ENCODE measurements at regions of chr11 and their contacts with region 1.

Region 1: DNA sequence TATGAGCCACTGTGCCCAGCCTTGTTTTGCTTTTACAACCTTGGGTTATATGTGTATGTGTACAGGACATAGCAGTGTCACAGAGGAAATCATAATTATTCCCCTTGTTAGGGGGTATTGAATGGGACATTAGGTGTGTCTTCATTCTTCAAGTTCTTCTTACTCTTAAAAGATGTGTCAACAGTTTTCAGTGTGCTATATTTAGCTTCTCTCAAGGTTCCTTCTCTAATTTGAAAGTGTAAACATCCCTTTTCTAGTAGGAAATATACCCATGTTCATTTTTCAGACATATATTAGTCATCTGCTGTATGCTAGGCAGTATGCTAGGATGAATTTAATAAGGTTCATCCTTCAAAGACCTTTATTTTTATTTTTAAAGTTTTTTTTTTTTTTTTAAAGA is 17.1 kb downstream of the PCF11 start:
- DNase-seq: no peak
- H3K4me3 Mint-ChIP-seq: no peak overlapping the region
- H3K27ac Mint-ChIP-seq: peak overlapping the region; percentile 73
- H3K4me1 Mint-ChIP-seq: peaks cover 69% of the 10 kb centered on the region
- H3K27me3 Mint-ChIP-seq: no peaks in the 10 kb centered on the region

Region 2: GRCh38 chr11:83162377-83162776 is 11.6 kb before region 1 on chr11:
- CTCF ChIA-PET with region 1: interaction called, 3 read pairs
- POLR2A ChIA-PET with region 1: interaction called, 6 read pairs
- intact Hi-C with region 1: loop called (anchors 1 kb)
- DNase-seq: no peak
- H3K4me3 Mint-ChIP-seq: peak overlapping the region; percentile 42
- H3K27ac Mint-ChIP-seq: no peak overlapping the region
- H3K4me1 Mint-ChIP-seq: peaks cover 54% of the 10 kb centered on the region
- H3K27me3 Mint-ChIP-seq: no peaks in the 10 kb centered on the region

Region 3: GRCh38 chr11:83193315-83194280 is 19.6 kb after region 1 on chr11 and contains the start of gene ANKRD42:
- CTCF ChIA-PET with region 1: no interaction called
- POLR2A ChIA-PET with region 1: no interaction called
- intact Hi-C with region 1: loop called (anchors 2 kb)
- DNase-seq: peak; percentile 93
- H3K4me3 Mint-ChIP-seq: peak within 1 kb of the TSS; percentile 99
- H3K27ac Mint-ChIP-seq: peak within 1 kb of the TSS; percentile 98
- H3K4me1 Mint-ChIP-seq: peaks cover 38% of the 10 kb centered on the region
- H3K27me3 Mint-ChIP-seq: no peaks in the 10 kb centered on the region
- total RNA-seq, gene ANKRD42: 3.8 to 5.4 TPM

Region 4: GRCh38 chr11:83241291-83241946 is 67.4 kb after region 1 on chr11:
- CTCF ChIA-PET with region 1: no interaction called
- POLR2A ChIA-PET with region 1: no interaction called
- intact Hi-C with region 1: no loop called
- DNase-seq: peak; percentile 26
- H3K4me3 Mint-ChIP-seq: no peak overlapping the region
- H3K27ac Mint-ChIP-seq: no peak overlapping the region
- H3K4me1 Mint-ChIP-seq: no peaks in the 10 kb centered on the region
- H3K27me3 Mint-ChIP-seq: no peaks in the 10 kb centered on the region